ENCODE measurements at regions of chr10 and their contacts with region 1.

Region 1: GRCh38 chr10:133565441-133566294 is at the start of gene SYCE1:
- DNase-seq: peak; percentile 86
- H3K4me3 ChIP-seq: peak within 1 kb of the TSS; percentile 56 to 61
- H3K27ac ChIP-seq: peak within 1 kb of the TSS in 1 of 2 donors; percentile 83
- H3K4me1 ChIP-seq: no peaks in the 10 kb centered on the region
- H3K27me3 ChIP-seq: no peaks in the 10 kb centered on the region
- CTCF ChIP-seq: peak in 1 of 3 experiments; percentile 55
- POLR2A ChIP-seq: no peak
- total RNA-seq, gene SYCE1: 43.4 to 78.2 TPM

Region 2: DNA sequence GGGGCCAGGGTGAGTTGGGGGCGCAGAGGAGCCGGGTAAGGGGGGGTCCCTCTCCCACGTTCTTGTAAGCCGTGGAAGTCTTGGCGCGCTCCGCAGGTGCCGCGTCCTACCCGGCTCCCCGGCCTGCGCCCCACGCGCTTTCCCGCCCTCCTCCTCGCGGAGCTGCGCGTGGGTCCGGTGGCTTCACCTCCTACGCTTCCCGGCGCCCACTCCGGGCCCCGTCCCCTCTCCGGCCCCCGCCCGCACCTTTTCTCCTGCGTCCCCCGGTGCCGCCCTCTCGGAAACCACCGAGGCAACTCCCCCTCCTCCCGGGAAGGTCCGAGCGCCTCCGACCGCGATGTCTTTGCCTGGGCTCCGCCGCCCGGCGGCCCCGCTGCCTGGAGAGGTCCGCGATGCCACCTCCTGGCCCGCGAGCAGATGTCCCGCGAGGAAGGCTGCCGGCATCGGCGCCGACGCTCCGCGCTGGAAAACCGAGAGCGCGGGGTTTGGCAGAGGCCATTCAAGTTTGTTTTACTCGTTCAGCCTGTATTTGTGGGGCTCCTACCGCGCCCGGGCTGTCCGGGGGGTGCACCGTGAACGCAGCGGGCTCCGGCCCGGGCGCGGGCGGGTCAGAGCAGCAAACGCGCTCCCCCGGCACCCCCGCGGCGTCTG is 777.4 kb before region 1 on chr10:
- intact Hi-C with region 1: no loop called
- DNase-seq: peak; percentile 29
- H3K4me3 ChIP-seq: peak overlapping the region; percentile 6 to 34
- H3K27ac ChIP-seq: no peak overlapping the region
- H3K4me1 ChIP-seq: peaks cover 13% of the 10 kb centered on the region
- H3K27me3 ChIP-seq: no peaks in the 10 kb centered on the region
- CTCF ChIP-seq: no peak
- POLR2A ChIP-seq: no peak

Region 3: GRCh38 chr10:133294189-133294588 is 271.5 kb before region 1 on chr10:
- intact Hi-C with region 1: no loop called
- DNase-seq: no peak
- H3K4me3 ChIP-seq: no peak overlapping the region
- H3K27ac ChIP-seq: no peak overlapping the region
- H3K4me1 ChIP-seq: no peaks in the 10 kb centered on the region
- H3K27me3 ChIP-seq: no peaks in the 10 kb centered on the region
- CTCF ChIP-seq: no peak
- POLR2A ChIP-seq: no peak

Region 4: GRCh38 chr10:133388973-133389818 is 176.5 kb before region 1 on chr10:
- intact Hi-C with region 1: no loop called
- DNase-seq: no peak
- H3K4me3 ChIP-seq: no peak overlapping the region
- H3K27ac ChIP-seq: no peak overlapping the region
- H3K4me1 ChIP-seq: peaks cover 4% of the 10 kb centered on the region
- H3K27me3 ChIP-seq: no peaks in the 10 kb centered on the region
- CTCF ChIP-seq: no peak
- POLR2A ChIP-seq: no peak

Region 5: GRCh38 chr10:133422821-133423771 is 142.6 kb before region 1 on chr10:
- intact Hi-C with region 1: loop called (anchors 10 kb)
- DNase-seq: no peak
- H3K4me3 ChIP-seq: no peak overlapping the region
- H3K27ac ChIP-seq: no peak overlapping the region
- H3K4me1 ChIP-seq: no peaks in the 10 kb centered on the region
- H3K27me3 ChIP-seq: no peaks in the 10 kb centered on the region
- CTCF ChIP-seq: no peak
- POLR2A ChIP-seq: no peak

Region 6: GRCh38 chr10:133438711-133439273 is 126.9 kb before region 1 on chr10:
- intact Hi-C with region 1: no loop called
- DNase-seq: no peak
- H3K4me3 ChIP-seq: no peak overlapping the region
- H3K27ac ChIP-seq: no peak overlapping the region
- H3K4me1 ChIP-seq: peaks cover 2% of the 10 kb centered on the region
- H3K27me3 ChIP-seq: no peaks in the 10 kb centered on the region
- CTCF ChIP-seq: no peak
- POLR2A ChIP-seq: no peak

Measured in testis (tissue), 5 donors.